ENCODE measurements at regions of chr2 and their contacts with region 1.

Region 1: DNA sequence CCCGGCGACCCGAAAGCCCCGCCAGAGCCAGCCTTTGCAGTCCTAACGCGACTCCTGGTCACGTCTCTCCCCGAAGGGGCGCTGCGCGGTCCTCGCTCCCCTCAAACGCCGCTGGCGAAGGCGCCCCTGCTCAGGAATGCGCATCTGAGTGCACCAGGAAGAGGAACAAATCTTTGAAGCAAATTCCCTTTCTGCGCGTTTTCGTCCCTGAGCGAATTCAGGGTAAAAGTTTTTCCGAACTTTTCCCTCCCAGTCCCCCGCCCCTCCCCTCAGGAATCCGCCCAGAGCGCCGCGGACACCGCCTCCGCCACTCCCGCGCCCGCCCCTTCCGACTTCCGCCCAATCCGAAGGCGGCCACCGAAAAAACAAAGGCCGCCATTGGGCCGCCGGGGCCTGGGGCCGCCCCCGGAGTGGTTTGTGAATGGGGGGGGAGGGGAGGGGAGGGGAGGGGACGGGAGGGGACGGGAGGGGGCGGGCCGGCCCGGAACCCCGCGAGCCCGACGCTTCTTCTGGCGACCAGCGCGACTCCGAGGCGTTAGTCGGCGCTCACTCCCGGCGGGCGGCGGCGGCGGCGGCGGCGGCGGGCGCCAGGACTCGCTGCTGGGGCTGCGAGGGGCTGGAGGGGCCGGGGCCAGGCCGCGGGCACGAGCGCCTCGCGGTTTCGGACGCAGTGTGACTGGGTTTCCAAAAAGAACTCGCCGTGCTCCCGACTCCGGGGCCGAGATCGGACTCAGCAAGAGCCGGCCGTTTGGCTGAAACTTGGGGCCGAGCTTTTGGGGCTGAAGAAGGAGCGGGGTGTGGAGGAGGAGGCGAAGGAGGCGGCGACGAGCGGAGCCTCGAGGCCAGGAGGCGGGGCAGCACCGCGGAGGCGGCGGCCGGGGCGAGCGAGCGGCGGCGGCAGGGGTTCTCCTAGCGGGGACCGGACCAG is at the start of gene FZD7:
- DNase-seq: no peak
- H3K4me3 ChIP-seq: peak within 1 kb of the TSS; percentile 64 to 84
- H3K27ac ChIP-seq: peak within 1 kb of the TSS; percentile 92
- H3K4me1 ChIP-seq: peaks cover 28% of the 10 kb centered on the region
- H3K27me3 ChIP-seq: no peaks in the 10 kb centered on the region
- CTCF ChIP-seq: no peak
- POLR2A ChIP-seq: peak in 1 of 2 donors; percentile 89
- total RNA-seq, gene FZD7: 37.1 TPM

Region 2: DNA sequence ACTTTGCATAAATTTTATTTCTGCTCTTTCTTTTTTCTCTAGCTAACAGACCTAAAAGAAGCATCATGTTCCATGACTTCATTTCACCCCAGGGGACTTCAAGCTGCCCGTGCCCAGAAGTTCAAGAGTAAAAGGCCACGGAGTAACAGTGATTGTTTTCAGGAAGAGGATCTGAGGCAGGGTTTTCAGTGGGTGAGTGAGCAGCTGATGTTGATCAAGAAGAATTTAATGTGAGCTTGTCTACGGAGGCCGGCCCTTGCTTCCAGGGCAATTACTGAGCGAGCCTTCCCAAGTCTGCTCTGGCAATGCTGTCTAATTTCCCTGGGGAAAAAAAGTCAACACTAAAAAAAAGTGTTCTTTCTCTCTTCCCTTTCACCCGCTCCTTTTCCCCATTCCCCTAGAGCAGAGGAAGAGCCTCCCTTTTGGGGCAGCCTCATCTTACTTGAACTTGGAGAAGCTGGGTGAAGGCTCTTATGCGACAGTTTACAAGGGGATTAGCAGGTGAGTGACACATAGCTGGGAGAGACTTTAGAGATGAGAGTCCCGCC is 226.1 kb before region 1 on chr2:
- intact Hi-C with region 1: loop called (anchors 5 kb)
- DNase-seq: no peak
- H3K4me3 ChIP-seq: no peak overlapping the region
- H3K27ac ChIP-seq: peak overlapping the region; percentile 55
- H3K4me1 ChIP-seq: peaks cover 5% of the 10 kb centered on the region
- H3K27me3 ChIP-seq: no peaks in the 10 kb centered on the region
- CTCF ChIP-seq: no peak
- POLR2A ChIP-seq: no peak

Region 3: GRCh38 chr2:201882353-201883090 is 151.1 kb before region 1 on chr2:
- intact Hi-C with region 1: loop called (anchors 10 kb)
- DNase-seq: no peak
- H3K4me3 ChIP-seq: no peak overlapping the region
- H3K27ac ChIP-seq: no peak overlapping the region
- H3K4me1 ChIP-seq: peaks cover 23% of the 10 kb centered on the region
- H3K27me3 ChIP-seq: no peaks in the 10 kb centered on the region
- CTCF ChIP-seq: no peak
- POLR2A ChIP-seq: no peak

Region 4: GRCh38 chr2:202172439-202173211 is 139.0 kb after region 1 on chr2:
- intact Hi-C with region 1: loop called (anchors 5 kb)
- DNase-seq: no peak
- H3K4me3 ChIP-seq: no peak overlapping the region
- H3K27ac ChIP-seq: no peak overlapping the region
- H3K4me1 ChIP-seq: peaks cover 4% of the 10 kb centered on the region
- H3K27me3 ChIP-seq: no peaks in the 10 kb centered on the region
- CTCF ChIP-seq: no peak
- POLR2A ChIP-seq: no peak

Measured in vagina (tissue), 2 donors.